Gastrocnemius medialis (tissue), 4 donors: ENCODE measurements at regions of chr13 and their contacts with region 1.

Region 1: DNA sequence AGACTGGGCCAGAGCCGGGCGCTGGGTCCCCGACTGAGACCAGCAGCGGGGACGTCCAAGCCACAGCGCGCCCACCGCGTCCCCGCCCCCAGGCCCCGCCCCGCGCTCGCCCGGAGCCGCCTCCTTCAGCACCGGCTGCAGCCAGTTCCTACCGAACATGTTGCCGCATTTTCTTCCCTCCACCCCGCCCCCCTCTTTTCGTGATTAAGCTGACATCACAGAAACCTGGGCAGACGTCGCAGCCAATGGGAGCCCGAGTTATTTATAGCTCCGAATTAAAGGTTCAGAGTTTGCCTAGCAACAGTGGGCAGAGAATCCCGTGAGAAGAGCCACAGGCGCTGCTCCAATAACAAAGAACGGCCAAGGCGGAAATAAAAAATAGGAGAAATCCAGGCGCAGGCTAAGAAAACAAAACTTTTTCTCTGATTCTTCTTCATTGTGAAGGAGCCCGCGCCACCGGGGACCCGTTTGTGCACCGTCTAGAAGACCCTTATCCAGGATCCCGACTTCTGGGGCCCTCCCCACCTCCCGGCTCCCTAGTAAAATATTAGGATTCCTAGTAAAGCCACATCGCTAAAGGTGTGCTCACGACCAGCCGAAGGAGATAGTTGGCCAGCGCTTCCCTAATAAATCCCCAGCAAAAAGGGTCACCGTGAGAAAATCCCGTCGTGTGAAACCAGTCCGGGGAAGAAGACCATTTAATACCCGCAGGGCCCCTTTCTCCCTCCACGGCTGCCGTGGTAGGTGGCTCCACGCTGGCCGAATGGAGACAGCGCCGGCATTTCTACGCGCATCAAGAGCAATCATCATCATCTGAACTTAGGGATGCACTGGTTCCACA is 61.7 kb downstream of the SERP2 start:
- DNase-seq: peak; percentile 94 to 96
- ATAC-seq: peak; percentile 75 to 78
- H3K4me3 ChIP-seq: peak overlapping the region; percentile 79 to 85 (median 82)
- H3K27ac ChIP-seq: peak overlapping the region; percentile 87 to 95 (median 92)
- H3K4me1 ChIP-seq: peaks cover 28 to 47% of the 10 kb centered on the region in 2 donors
- H3K27me3 ChIP-seq: no peaks in the 10 kb centered on the region
- CTCF ChIP-seq: no peak
- POLR2A ChIP-seq: peak; percentile 76 to 93

Region 2: GRCh38 chr13:44050450-44051063 is 384.8 kb before region 1 on chr13:
- in situ Hi-C with region 1: loop called (anchors 5 to 10 kb)
- intact Hi-C with region 1: loop called (anchors 1 kb)
- DNase-seq: no peak
- ATAC-seq: peak; percentile 58 to 70
- H3K4me3 ChIP-seq: no peak overlapping the region
- H3K27ac ChIP-seq: no peak overlapping the region
- H3K4me1 ChIP-seq: peaks cover 0 to 4% of the 10 kb centered on the region in 2 donors
- H3K27me3 ChIP-seq: no peaks in the 10 kb centered on the region
- CTCF ChIP-seq: peak; percentile 62 to 87 (median 73)
- POLR2A ChIP-seq: no peak

Region 3: DNA sequence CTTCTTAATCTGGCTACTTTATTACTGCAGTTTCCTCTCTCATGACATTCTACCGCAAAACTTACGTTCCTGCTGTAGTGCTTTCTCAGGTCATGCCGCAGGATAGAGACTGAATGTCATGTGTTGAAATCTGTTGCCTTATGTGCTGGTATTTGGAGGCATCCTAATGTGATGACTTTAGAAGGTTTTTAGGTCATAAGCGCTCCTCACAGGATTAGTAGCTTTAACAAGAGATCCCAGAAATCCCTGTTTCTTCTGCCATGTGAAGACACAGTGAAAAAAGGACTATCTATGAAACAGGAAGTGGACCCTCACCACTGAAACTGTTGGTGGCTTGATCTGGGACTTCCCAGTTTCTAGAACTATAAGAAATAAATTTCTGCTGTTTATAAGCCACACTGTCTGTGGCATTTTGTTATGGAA is 346.4 kb before region 1 on chr13:
- in situ Hi-C with region 1: no loop called
- intact Hi-C with region 1: no loop called
- DNase-seq: no peak
- ATAC-seq: no peak
- H3K4me3 ChIP-seq: no peak overlapping the region
- H3K27ac ChIP-seq: no peak overlapping the region
- H3K4me1 ChIP-seq: no peaks in the 10 kb centered on the region
- H3K27me3 ChIP-seq: no peaks in the 10 kb centered on the region
- CTCF ChIP-seq: no peak
- POLR2A ChIP-seq: no peak

Region 4: GRCh38 chr13:44191504-44192171 is 243.7 kb before region 1 on chr13:
- in situ Hi-C with region 1: loop called (anchors 5 to 25 kb)
- intact Hi-C with region 1: loop called (anchors 2 kb)
- DNase-seq: peak; percentile 57 to 68
- ATAC-seq: peak; percentile 98 to 99
- H3K4me3 ChIP-seq: peak overlapping the region; percentile 26 to 44 (median 32)
- H3K27ac ChIP-seq: peak overlapping the region; percentile 52 to 71 (median 56)
- H3K4me1 ChIP-seq: peaks cover 5 to 11% of the 10 kb centered on the region in 2 donors
- H3K27me3 ChIP-seq: no peaks in the 10 kb centered on the region
- CTCF ChIP-seq: peak; percentile 80 to 98 (median 89)
- POLR2A ChIP-seq: no peak

Region 5: GRCh38 chr13:44300895-44301638 is 134.3 kb before region 1 on chr13:
- in situ Hi-C with region 1: no loop called
- intact Hi-C with region 1: loop called (anchors 2 kb)
- DNase-seq: peak; percentile 84 to 88
- ATAC-seq: peak; percentile 93 to 94
- H3K4me3 ChIP-seq: no peak overlapping the region
- H3K27ac ChIP-seq: peak overlapping the region; percentile 71 to 89 (median 86)
- H3K4me1 ChIP-seq: peaks cover 70 to 79% of the 10 kb centered on the region in 2 donors
- H3K27me3 ChIP-seq: no peaks in the 10 kb centered on the region
- CTCF ChIP-seq: peak in 1 of 5 experiments; percentile 37
- POLR2A ChIP-seq: peak in 1 of 2 donors; percentile 25

Region 6: DNA sequence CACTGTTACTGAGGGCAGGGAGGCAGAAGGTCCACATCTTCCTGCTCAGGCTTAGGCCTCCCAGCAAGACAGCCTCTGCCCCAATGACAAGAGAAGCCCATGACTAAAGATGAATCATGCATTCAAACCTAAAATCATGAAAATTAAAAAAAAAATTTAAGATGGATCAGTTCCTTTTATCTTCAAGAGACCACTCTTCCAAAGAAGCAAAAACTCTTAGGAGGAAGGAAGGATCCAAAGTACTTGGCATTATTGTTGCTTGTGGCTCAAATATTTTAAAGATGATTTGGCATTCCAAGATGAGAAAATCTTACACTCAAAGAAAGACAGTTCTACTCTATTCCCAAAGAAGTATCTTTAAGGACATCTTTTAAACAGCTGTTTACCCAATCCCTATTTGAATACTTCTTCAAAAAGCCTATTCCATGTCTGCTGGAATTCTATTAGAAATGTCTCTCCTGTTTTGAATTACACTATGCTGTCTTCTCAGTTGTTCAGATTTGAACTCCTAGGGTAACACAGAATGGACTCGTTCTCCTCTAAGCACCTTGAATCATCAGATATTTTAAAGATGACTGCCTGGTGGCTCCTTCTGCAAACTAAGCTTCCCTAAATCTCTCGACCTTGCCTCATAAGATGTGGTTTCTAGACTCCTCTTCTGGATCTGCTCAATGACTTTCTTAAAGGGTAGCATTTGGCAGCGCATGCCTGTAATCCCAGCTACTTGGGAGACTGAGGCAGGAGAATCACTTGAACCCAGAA is 54.8 kb before region 1 on chr13:
- in situ Hi-C with region 1: no loop called
- intact Hi-C with region 1: loop called (anchors 5 kb)
- DNase-seq: no peak
- ATAC-seq: no peak
- H3K4me3 ChIP-seq: no peak overlapping the region
- H3K27ac ChIP-seq: no peak overlapping the region
- H3K4me1 ChIP-seq: peaks cover 6% of the 10 kb centered on the region in 2 donors
- H3K27me3 ChIP-seq: no peaks in the 10 kb centered on the region
- CTCF ChIP-seq: no peak
- POLR2A ChIP-seq: no peak